MCF 10A (cell line): ENCODE measurements at regions of chr7 and their contacts with region 1.

Region 1: GRCh38 chr7:133030346-133030745 is 51.5 kb downstream of the CHCHD3 start:
- DNase-seq: no peak
- H3K4me3 Mint-ChIP-seq: no peak overlapping the region
- H3K27ac Mint-ChIP-seq: no peak overlapping the region
- H3K4me1 Mint-ChIP-seq: no peaks in the 10 kb centered on the region
- H3K27me3 Mint-ChIP-seq: no peaks in the 10 kb centered on the region
- CTCF ChIP-seq: no peak

Region 2: DNA sequence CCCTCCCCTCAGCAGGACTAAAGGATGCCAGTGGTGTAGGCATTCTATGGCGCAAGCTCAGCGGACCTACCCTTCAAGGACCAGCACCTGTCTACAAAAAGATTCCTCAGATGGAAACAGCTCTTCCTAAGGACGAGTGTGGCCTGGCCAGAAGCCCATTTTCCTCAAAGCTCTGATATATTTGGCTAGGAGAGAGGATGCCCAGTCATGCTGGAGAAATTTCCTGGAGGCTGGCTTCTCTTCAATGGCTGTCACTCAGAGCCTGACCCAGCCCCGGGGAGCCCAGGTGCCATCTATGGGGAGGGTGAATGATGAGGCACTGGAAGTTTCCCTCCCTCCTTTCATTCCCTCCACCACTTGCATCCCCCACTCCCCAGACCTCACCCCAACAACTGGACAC is 565.6 kb before region 1 on chr7:
- CTCF ChIA-PET with region 1: no interaction called
- POLR2A ChIA-PET with region 1: no interaction called
- intact Hi-C with region 1: loop called (anchors 5 kb)
- DNase-seq: peak; percentile 68
- H3K4me3 Mint-ChIP-seq: no peak overlapping the region
- H3K27ac Mint-ChIP-seq: no peak overlapping the region
- H3K4me1 Mint-ChIP-seq: no peaks in the 10 kb centered on the region
- H3K27me3 Mint-ChIP-seq: peaks cover 18% of the 10 kb centered on the region
- CTCF ChIP-seq: no peak